GM12878 (cell line): ENCODE measurements at regions of chr22 and their contacts with region 1.

Region 1: GRCh38 chr22:22959147-22959827 is 71.7 kb downstream of the IGLL5 start:
- DNase-seq: peak; percentile 56
- ATAC-seq: peak; percentile 66
- H3K4me3 ChIP-seq: no peak overlapping the region
- H3K27ac ChIP-seq: no peak overlapping the region
- H3K4me1 ChIP-seq: peaks cover 11% of the 10 kb centered on the region
- H3K27me3 ChIP-seq: no peaks in the 10 kb centered on the region
- CTCF ChIP-seq: peak; percentile 81 to 100 (median 95); a peak in 5 of 6 replicates
- EP300 ChIP-seq: no peak
- POLR2A ChIP-seq: no peak
- RAD21 ChIP-seq: peak; percentile 100

Region 2: GRCh38 chr22:22060200-22061084 is 898.8 kb before region 1 on chr22:
- CTCF ChIA-PET with region 1: interaction called, 46 read pairs
- POLR2A ChIA-PET with region 1: no interaction called
- RAD21 ChIA-PET with region 1: interaction called, 35 read pairs
- SMC1A ChIA-PET with region 1: interaction called, 52 read pairs
- in situ Hi-C with region 1: no loop called
- intact Hi-C with region 1: loop called (anchors 10 kb)
- DNase-seq: no peak
- ATAC-seq: peak; percentile 99
- H3K4me3 ChIP-seq: no peak overlapping the region
- H3K27ac ChIP-seq: peak overlapping the region; percentile 43; the same call in 1 of the 2 replicates
- H3K4me1 ChIP-seq: peaks cover 15% of the 10 kb centered on the region
- H3K27me3 ChIP-seq: no peaks in the 10 kb centered on the region
- CTCF ChIP-seq: peak; percentile 74 to 98 (median 81)
- EP300 ChIP-seq: no peak
- POLR2A ChIP-seq: no peak
- RAD21 ChIP-seq: peak; percentile 68

Region 3: DNA sequence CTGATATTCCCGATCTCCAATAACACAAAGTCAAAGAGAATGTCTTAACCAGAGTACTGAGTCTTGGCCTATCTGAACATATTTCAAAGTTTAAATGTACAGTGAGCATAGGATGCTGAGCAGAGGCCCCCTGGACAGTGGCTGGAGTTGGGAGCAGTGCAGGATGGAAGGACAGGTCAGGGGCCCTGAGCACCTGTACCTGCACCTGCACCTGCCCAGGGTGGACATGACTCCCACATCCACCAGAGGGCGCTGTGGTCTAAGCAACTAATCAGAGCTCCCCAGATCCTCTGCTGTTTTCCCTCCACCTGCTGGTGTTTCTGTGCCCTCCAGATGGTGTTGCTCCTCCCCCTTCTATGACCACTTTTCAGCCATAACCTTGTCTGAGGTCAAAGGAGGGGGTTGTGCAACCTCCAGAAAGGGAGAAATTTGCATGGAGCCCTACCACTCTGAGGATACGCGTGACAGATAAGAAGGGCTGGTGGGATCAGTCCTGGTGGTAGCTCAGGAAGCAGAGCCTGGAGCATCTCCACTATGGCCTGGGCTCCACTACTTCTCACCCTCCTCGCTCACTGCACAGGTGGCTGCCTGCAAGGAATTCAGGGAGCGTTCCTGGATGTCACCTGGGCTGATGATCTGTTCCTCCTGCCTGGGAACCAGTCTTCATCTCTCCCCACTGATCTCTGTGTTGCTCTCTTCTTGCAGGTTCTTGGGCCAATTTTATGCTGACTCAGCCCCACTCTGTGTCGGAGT is 763.8 kb before region 1 on chr22:
- CTCF ChIA-PET with region 1: interaction called, 64 read pairs
- POLR2A ChIA-PET with region 1: interaction called, 15 read pairs
- RAD21 ChIA-PET with region 1: interaction called, 70 read pairs
- SMC1A ChIA-PET with region 1: interaction called, 47 read pairs
- in situ Hi-C with region 1: loop called (anchors 5 kb)
- intact Hi-C with region 1: no loop called
- DNase-seq: peak; percentile 91
- ATAC-seq: peak; percentile 94
- H3K4me3 ChIP-seq: peak overlapping the region; percentile 62; the same call in 1 of the 2 replicates
- H3K27ac ChIP-seq: peak overlapping the region; percentile 63
- H3K4me1 ChIP-seq: peaks cover 18% of the 10 kb centered on the region
- H3K27me3 ChIP-seq: no peaks in the 10 kb centered on the region
- CTCF ChIP-seq: peak; percentile 94 to 95 (median 94); a peak in 5 of 6 replicates
- EP300 ChIP-seq: peak in 1 of 2 experiments; percentile 64; a peak in 3 of 4 replicates
- POLR2A ChIP-seq: peak; percentile 56; the same call in 1 of the 2 replicates
- RAD21 ChIP-seq: peak; percentile 55

Region 4: DNA sequence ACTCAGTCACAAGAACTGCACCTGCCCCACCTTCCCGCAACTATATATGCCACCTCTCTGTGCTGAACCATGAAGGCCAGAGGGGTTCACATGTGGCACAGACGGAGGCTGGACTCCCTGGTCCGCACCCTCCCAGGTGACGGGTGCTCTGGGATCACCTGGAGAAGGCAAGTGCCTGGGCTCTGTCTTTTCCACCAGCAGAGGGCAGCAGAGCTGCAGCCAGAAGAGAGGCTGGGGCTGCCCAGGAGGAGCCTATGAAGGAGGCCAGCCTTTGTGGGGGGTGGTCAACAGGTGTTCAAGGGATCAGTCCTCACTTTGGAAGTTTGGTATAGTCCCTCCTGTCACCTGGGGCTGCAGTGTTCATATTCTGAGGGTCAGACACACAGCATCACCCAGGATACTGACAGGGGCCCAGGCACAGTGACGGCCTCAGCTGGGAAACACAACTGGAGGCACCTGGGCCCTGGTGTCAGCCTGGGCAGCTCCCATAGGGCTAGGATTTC is 110.9 kb before region 1 on chr22:
- CTCF ChIA-PET with region 1: interaction called, 264 read pairs
- POLR2A ChIA-PET with region 1: interaction called, 3 read pairs
- RAD21 ChIA-PET with region 1: interaction called, 174 read pairs
- SMC1A ChIA-PET with region 1: interaction called, 201 read pairs
- in situ Hi-C with region 1: no loop called
- intact Hi-C with region 1: loop called (anchors 1 kb)
- DNase-seq: no peak
- ATAC-seq: peak; percentile 91
- H3K4me3 ChIP-seq: no peak overlapping the region
- H3K27ac ChIP-seq: no peak overlapping the region
- H3K4me1 ChIP-seq: peaks cover 18% of the 10 kb centered on the region
- H3K27me3 ChIP-seq: no peaks in the 10 kb centered on the region
- CTCF ChIP-seq: peak; percentile 49 to 79 (median 78)
- EP300 ChIP-seq: no peak
- POLR2A ChIP-seq: no peak
- RAD21 ChIP-seq: no peak

Region 5: DNA sequence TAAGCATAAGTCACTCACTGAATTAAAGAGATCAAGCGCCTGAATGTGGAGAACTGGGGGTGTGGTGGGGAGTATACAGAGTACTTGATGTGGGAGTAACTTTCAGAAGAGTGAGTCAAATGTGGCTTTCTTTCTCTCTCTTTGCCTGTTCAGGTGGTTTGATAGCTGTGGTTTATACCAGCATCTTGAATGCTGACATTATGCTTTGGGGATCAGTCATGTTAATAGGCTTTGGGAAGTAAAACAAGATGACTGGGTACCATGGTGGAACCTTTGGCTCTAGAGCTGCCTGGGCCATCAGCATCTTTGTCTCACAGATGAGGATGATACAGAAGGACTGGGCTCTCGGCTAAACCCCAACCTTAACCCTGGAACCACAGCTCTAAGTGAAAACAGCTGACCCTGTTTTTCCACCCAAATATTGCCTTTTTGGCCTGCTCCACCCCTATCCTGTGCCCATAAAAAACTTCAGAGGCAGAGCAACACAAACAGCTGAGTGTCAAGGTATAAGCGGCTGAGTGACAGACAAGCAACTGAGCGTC is 52.9 kb after region 1 on chr22:
- CTCF ChIA-PET with region 1: interaction called, 19 read pairs
- POLR2A ChIA-PET with region 1: no interaction called
- RAD21 ChIA-PET with region 1: interaction called, 23 read pairs
- SMC1A ChIA-PET with region 1: interaction called, 13 read pairs
- in situ Hi-C with region 1: no loop called
- intact Hi-C with region 1: no loop called
- DNase-seq: peak; percentile 36
- ATAC-seq: peak; percentile 98
- H3K4me3 ChIP-seq: no peak overlapping the region
- H3K27ac ChIP-seq: no peak overlapping the region
- H3K4me1 ChIP-seq: peaks cover 14% of the 10 kb centered on the region
- H3K27me3 ChIP-seq: 0 out of 4 replicates have a peak, but pooled peaks cover 0 to 3% of the 10 kb centered on the region in 2 experiments
- CTCF ChIP-seq: no peak
- EP300 ChIP-seq: peak in 1 of 2 experiments; percentile 56; a peak in 1 of 4 replicates
- POLR2A ChIP-seq: no peak
- RAD21 ChIP-seq: no peak

Region 6: DNA sequence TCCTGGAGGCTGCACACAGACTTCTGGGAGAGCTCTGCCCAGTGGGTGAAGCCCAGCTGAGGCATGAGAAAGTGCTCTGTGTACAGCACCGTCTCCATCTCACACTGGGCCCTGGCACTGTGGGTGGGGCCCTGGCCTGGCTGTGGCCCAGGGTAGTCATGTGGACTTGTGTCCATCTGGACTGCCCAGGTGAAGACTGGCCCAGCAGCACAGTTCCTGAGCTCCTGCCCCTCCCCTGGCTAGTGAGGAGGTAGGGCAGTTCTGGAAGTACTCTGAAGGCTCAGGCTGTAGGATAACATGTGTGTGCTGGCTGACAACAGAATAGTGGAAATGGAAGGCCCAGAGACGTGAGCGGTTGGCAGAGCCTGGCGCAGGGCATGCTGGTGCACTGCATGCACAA is 147.1 kb after region 1 on chr22:
- CTCF ChIA-PET with region 1: interaction called, 8 read pairs
- POLR2A ChIA-PET with region 1: no interaction called
- RAD21 ChIA-PET with region 1: interaction called, 30 read pairs
- SMC1A ChIA-PET with region 1: interaction called, 12 read pairs
- in situ Hi-C with region 1: no loop called
- intact Hi-C with region 1: no loop called
- DNase-seq: no peak
- ATAC-seq: no peak
- H3K4me3 ChIP-seq: no peak overlapping the region
- H3K27ac ChIP-seq: no peak overlapping the region
- H3K4me1 ChIP-seq: no peaks in the 10 kb centered on the region
- H3K27me3 ChIP-seq: no peaks in the 10 kb centered on the region
- CTCF ChIP-seq: no peak
- EP300 ChIP-seq: no peak
- POLR2A ChIP-seq: no peak
- RAD21 ChIP-seq: no peak

Region 7: GRCh38 chr22:23289851-23290724 is 330.8 kb after region 1 on chr22:
- CTCF ChIA-PET with region 1: interaction called, 9 read pairs
- POLR2A ChIA-PET with region 1: no interaction called
- RAD21 ChIA-PET with region 1: interaction called, 9 read pairs
- SMC1A ChIA-PET with region 1: interaction called, 21 read pairs
- in situ Hi-C with region 1: no loop called
- intact Hi-C with region 1: no loop called
- DNase-seq: no peak
- ATAC-seq: peak; percentile 75
- H3K4me3 ChIP-seq: no peak overlapping the region
- H3K27ac ChIP-seq: no peak overlapping the region
- H3K4me1 ChIP-seq: peaks cover 9% of the 10 kb centered on the region
- H3K27me3 ChIP-seq: no peaks in the 10 kb centered on the region
- CTCF ChIP-seq: peak; percentile 55 to 85 (median 83)
- EP300 ChIP-seq: no peak
- POLR2A ChIP-seq: no peak
- RAD21 ChIP-seq: peak; percentile 38; the same call in 1 of the 2 replicates